Pancreas (tissue), 10 donors: ENCODE measurements at regions of chr14 and their contacts with region 1.

Region 1: DNA sequence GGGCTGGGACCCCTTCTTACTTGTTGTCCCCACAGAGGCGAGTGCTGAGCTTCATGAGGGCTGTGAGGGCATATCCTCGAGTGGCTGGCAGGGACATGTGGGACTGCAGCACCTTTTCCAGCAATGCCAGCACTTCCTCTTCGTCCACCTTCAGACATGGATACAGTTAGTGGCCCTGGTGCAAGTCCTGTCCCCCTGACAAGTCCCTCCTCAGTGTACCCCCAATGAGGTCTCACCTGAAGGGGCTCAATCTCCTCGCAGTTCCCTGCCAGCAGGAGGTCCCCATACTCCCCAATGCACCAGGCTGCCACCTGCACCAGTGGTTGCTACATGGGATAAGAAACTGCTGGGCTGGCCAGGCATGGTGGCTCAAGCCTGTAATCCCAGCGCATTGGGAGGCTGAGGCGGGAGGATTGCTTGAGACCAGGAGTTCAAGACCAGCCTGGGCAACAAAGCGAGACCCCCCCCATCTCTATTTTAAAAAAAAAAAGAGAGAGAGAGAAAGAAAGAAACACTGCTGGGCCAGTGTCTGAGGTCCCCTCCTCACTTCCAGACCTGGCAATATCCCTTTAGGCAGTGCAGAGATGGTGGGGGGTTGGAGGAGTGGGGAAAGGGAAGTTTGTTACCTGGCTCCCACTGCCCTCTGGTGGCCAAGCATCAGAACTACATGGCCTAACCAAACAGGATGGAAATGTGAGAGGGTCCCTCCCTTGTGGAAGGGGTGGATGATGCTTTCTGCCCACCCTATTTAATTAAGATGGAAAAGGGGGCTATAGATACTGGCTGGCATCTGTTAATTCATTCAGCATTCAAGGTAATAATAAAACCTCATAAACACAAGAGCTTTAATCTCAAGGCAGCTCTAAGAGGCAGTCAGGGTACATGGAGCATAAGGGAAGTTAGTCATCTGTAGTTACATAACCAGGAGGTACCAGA is 5.1 kb downstream of the AP1G2 start:
- DNase-seq: peak in 2 of 6 donors; percentile 60 to 62
- ATAC-seq: peak in 2 of 4 donors; percentile 23 to 30
- H3K4me3 ChIP-seq: no peak overlapping the region
- H3K27ac ChIP-seq: no peak overlapping the region
- H3K4me1 ChIP-seq: peaks cover 0 to 6% (median 0%) of the 10 kb centered on the region in 3 donors
- H3K27me3 ChIP-seq: no peaks in the 10 kb centered on the region
- CTCF ChIP-seq: peak; percentile 78 to 88 (median 82)

Region 2: DNA sequence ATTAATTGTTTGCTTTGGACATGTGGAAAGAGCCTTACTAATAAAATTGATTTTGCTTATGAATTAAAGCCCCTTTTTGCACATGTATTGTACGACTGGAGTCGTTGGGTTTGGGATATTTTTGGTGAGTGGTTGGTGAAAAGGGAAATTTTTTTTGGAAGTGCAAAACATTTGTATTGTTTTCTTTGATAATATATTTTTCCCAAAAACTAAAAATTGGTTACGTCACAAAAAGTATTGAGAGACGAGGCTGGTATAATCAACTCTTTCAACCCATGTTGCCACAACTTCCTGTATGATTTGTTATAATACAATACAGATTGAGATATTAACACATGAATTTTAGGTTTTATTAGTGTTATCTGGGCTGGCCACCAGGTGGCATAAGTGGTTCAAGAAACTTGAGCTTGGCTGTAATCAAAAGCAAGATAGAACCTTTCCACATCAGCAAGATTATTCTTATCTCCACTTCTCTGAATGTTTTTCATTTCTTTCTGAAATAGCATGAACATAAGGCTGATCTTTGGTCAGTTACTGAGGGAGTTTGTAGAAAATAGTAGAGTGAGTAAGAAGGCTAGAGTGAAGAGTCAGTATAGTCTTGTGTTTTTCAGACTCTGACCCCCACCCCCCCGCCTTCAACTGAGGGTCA is 84.3 kb before region 1 on chr14:
- intact Hi-C with region 1: loop called in 2 of 3 experiments (anchors 5 kb)
- DNase-seq: peak in 5 of 6 donors; percentile 34 to 67 (median 48)
- ATAC-seq: peak; percentile 73 to 94 (median 86)
- H3K4me3 ChIP-seq: no peak overlapping the region
- H3K27ac ChIP-seq: no peak overlapping the region
- H3K4me1 ChIP-seq: no peaks in the 10 kb centered on the region
- H3K27me3 ChIP-seq: no peaks in the 10 kb centered on the region
- CTCF ChIP-seq: peak in 3 of 4 donors; percentile 29 to 56 (median 50)

Region 3: GRCh38 chr14:23483236-23483854 is 79.2 kb before region 1 on chr14:
- intact Hi-C with region 1: loop called in 2 of 3 experiments (anchors 5 kb)
- DNase-seq: no peak
- ATAC-seq: peak in 1 of 4 donors; percentile 32
- H3K4me3 ChIP-seq: no peak overlapping the region
- H3K27ac ChIP-seq: no peak overlapping the region
- H3K4me1 ChIP-seq: no peaks in the 10 kb centered on the region
- H3K27me3 ChIP-seq: no peaks in the 10 kb centered on the region
- CTCF ChIP-seq: no peak